Astrocyte of the cerebellum (primary cell): ENCODE measurements at regions of chr5 and their contacts with region 1.

Region 1: GRCh38 chr5:178279725-178280438 is 47.3 kb upstream of the PHYKPL start:
- DNase-seq: peak; percentile 40
- H3K4me3 ChIP-seq: no peak overlapping the region
- CTCF ChIP-seq: peak; percentile 85

Region 2: DNA sequence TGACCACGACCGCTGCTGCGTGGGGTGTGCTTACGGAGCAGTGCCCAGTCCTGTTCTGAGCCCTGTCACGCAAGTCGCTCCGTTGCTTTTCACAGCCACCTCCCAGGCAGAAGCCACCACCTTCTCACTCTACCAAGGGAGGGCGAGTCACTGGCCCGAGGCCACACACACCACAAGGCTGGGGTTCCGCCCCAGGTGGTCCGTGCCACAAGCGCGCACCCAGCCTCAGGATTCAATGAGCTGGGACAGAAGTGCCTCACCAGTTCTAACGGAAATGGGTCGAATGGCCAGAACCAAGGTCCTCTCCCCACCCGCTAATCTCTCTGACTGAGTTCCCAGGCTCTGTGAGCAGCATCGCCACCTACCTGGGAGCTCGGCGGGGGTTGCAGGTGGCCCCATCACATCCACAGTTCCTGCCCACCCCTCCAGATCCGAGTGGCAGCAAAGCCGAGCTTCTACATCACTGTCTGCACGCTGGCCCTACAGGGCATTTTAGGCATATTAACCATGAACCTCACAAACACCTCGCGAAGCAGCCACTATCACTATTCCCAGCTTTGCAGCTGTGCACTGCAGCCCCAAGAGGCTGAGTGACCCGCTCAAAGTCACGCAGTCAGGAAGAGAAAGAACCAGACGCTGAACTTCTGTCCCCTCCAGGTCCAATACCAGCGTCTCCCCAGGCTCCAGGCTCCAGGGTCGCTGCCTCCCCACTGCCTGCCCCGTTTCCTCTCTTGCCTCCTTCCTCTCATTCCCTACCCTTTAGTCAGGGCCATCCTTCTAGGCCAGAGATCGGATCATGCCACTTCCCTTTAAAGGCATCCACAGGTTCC is 44.8 kb after region 1 on chr5:
- in situ Hi-C with region 1: no loop called
- DNase-seq: no peak
- H3K4me3 ChIP-seq: no peak overlapping the region
- CTCF ChIP-seq: no peak

Region 3: GRCh38 chr5:178590141-178590923 is 310.4 kb after region 1 on chr5 and contains the start of gene COL23A1:
- in situ Hi-C with region 1: loop called (anchors 25 kb)
- DNase-seq: peak; percentile 23
- H3K4me3 ChIP-seq: peak within 1 kb of the TSS; percentile 40
- CTCF ChIP-seq: peak; percentile 88